CD4-positive, alpha-beta memory T cell (primary cell): ENCODE measurements at regions of chr15 and their contacts with region 1.

Region 1: DNA sequence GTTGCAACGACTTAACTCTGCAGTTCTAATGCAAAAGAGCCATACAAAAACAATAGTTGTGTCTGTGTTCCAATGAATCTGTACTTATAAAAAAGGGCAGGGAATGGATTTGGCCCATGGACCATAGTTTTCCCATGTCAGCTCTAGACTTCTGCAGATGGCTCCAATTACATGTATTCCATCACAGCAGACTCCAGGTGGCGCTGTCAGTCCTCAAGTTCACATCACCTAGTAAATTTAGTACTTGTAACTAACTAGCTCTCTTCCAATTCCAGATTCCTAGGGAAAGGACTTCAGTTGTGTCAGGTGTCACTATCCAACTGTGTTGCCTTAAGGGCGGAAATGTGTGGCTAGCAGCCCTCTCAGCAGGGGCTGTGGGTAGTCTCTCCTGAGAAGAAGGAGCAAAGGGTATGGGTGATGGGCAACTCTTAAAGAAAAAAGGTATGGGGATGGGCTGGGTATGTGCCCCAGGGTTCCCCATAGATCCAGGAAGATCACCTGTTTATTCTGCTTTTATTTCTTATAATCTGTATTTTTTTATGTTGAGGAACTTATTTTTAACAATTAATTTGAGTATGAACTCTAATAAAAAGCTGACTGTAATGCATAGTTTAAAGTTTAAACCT is 36.2 kb downstream of the BBS4 start:
- DNase-seq: peak; percentile 40 to 64 (median 60)
- H3K4me3 ChIP-seq: no peak overlapping the region
- H3K4me3 Mint-ChIP-seq: no peak overlapping the region
- H3K27ac ChIP-seq: no peak overlapping the region
- H3K27ac Mint-ChIP-seq: peak overlapping the region in 2 of 7 donors; percentile 27 to 29
- H3K4me1 ChIP-seq: no peaks in the 10 kb centered on the region
- H3K4me1 Mint-ChIP-seq: no peaks in the 10 kb centered on the region
- H3K27me3 ChIP-seq: no peaks in the 10 kb centered on the region
- H3K27me3 Mint-ChIP-seq: no peaks in the 10 kb centered on the region

Region 2: GRCh38 chr15:72732516-72732915 is 10.3 kb after region 1 on chr15:
- CTCF ChIA-PET with region 1: interaction called, 43 read pairs
- POLR2A ChIA-PET with region 1: no interaction called
- intact Hi-C with region 1: no loop called
- DNase-seq: no peak
- H3K4me3 ChIP-seq: no peak overlapping the region
- H3K4me3 Mint-ChIP-seq: no peak overlapping the region
- H3K27ac ChIP-seq: no peak overlapping the region
- H3K27ac Mint-ChIP-seq: peak overlapping the region in 3 of 7 donors; percentile 46 to 87 (median 54)
- H3K4me1 ChIP-seq: no peaks in the 10 kb centered on the region
- H3K4me1 Mint-ChIP-seq: peaks cover 8 to 12% (median 10%) of the 10 kb centered on the region in 4 donors
- H3K27me3 ChIP-seq: no peaks in the 10 kb centered on the region
- H3K27me3 Mint-ChIP-seq: no peaks in the 10 kb centered on the region

Region 3: GRCh38 chr15:72740219-72740618 is 18.0 kb after region 1 on chr15:
- CTCF ChIA-PET with region 1: interaction called, 43 read pairs
- POLR2A ChIA-PET with region 1: no interaction called
- intact Hi-C with region 1: no loop called
- DNase-seq: peak in 4 of 5 donors; percentile 9 to 46 (median 42)
- H3K4me3 ChIP-seq: peak overlapping the region in 1 of 2 donors; percentile 20
- H3K4me3 Mint-ChIP-seq: peak overlapping the region; percentile 32 to 83 (median 70)
- H3K27ac ChIP-seq: peak overlapping the region; percentile 39
- H3K27ac Mint-ChIP-seq: peak overlapping the region; percentile 41 to 89 (median 84)
- H3K4me1 ChIP-seq: peaks cover 29% of the 10 kb centered on the region
- H3K4me1 Mint-ChIP-seq: peaks cover 28 to 37% (median 32%) of the 10 kb centered on the region in 4 donors
- H3K27me3 ChIP-seq: no peaks in the 10 kb centered on the region
- H3K27me3 Mint-ChIP-seq: no peaks in the 10 kb centered on the region

Region 4: DNA sequence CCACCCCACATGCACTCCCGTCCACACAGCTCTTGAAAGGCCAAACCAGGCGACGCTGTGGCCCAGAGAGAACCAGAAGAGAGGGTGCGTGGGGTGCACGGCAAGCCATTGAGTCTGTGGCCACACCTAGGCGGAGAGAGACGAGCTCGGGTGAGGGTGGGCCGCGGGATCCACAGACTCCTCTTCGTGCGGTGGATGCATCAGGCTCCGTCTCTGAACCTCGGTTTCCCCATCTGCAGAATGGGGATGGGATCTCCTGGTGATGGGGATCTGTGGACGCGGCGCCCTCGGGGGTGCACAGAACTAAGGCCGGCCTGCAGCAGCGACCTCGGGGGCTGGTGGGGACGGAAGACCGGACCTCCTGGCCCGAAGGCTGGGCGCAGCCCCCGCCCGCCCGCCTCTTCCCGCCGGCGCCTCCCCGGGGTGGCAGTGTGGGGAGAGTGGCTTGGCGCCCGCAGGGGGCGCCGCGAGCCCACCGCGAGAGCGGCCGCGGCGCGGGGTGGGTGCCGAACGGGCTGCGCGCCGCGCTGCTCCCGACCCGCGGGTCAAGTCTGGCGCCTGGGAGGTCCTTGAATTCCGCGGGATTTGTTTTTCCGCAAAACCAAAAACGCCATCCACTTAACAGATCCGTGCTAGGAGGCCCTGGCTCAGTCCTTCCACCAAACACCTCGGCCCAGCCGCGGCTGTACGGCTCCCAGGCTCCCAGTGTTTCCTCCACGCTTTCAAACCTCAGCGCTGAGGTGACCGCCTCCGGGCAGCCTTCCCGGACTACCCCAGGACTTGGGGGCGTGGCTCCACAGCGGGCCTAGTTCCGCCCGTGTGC is 74.5 kb after region 1 on chr15:
- CTCF ChIA-PET with region 1: interaction called, 15 read pairs
- POLR2A ChIA-PET with region 1: no interaction called
- intact Hi-C with region 1: loop called (anchors 5 kb)
- DNase-seq: peak in 4 of 5 donors; percentile 28 to 47 (median 36)
- H3K4me3 ChIP-seq: peak overlapping the region in 1 of 2 donors; percentile 57
- H3K4me3 Mint-ChIP-seq: peak overlapping the region; percentile 84 to 91 (median 87)
- H3K27ac ChIP-seq: no peak overlapping the region
- H3K27ac Mint-ChIP-seq: peak overlapping the region in 6 of 7 donors; percentile 43 to 87 (median 82)
- H3K4me1 ChIP-seq: peaks cover 4% of the 10 kb centered on the region
- H3K4me1 Mint-ChIP-seq: peaks cover 5 to 20% (median 7%) of the 10 kb centered on the region in 4 donors
- H3K27me3 ChIP-seq: no peaks in the 10 kb centered on the region
- H3K27me3 Mint-ChIP-seq: peaks cover 10 to 11% of the 10 kb centered on the region in 2 donors

Region 5: DNA sequence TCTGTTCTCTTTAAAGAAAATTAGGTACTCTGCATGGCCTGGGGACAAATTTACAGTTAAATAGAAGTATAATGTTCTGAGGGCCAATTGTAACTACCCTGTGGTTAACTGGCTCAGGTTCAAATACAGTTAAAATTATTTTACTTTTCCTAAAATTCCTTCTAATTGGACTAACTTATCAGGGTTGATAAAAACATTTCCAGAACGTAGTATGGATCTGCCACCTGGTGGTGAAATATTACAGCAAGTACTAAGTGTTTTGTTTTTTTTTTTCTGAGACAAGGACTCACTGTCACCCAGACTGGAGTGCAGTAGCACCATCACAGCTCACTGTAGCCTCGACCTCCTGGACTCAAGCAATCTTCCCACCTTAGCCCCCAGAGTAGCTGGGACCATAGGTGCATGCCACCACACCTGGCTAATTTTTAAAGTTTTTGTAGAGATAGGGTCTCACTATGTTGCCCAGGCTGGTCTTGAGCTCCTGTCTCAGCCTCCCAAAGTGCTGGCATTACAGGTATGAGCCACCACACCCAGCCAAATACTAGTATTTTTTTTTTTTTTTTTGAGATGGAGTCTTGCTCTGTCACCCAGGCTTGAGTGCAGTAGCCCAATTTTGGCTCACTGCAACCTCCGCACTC is 359.3 kb after region 1 on chr15:
- CTCF ChIA-PET with region 1: interaction called, 47 read pairs
- POLR2A ChIA-PET with region 1: interaction called, 6 read pairs
- intact Hi-C with region 1: loop called (anchors 1 kb)
- DNase-seq: peak in 4 of 5 donors; percentile 40 to 51 (median 44)
- H3K4me3 ChIP-seq: no peak overlapping the region
- H3K4me3 Mint-ChIP-seq: no peak overlapping the region
- H3K27ac ChIP-seq: no peak overlapping the region
- H3K27ac Mint-ChIP-seq: no peak overlapping the region
- H3K4me1 ChIP-seq: no peaks in the 10 kb centered on the region
- H3K4me1 Mint-ChIP-seq: peaks cover 0 to 4% (median under 1%) of the 10 kb centered on the region in 4 donors
- H3K27me3 ChIP-seq: no peaks in the 10 kb centered on the region
- H3K27me3 Mint-ChIP-seq: no peaks in the 10 kb centered on the region

Region 6: GRCh38 chr15:73127301-73127936 is 405.2 kb after region 1 on chr15:
- CTCF ChIA-PET with region 1: no interaction called
- POLR2A ChIA-PET with region 1: no interaction called
- intact Hi-C with region 1: loop called (anchors 2 kb)
- DNase-seq: peak in 4 of 5 donors; percentile 8 to 36 (median 20)
- H3K4me3 ChIP-seq: no peak overlapping the region
- H3K4me3 Mint-ChIP-seq: no peak overlapping the region
- H3K27ac ChIP-seq: no peak overlapping the region
- H3K27ac Mint-ChIP-seq: peak overlapping the region in 1 of 7 donors; percentile 50
- H3K4me1 ChIP-seq: no peaks in the 10 kb centered on the region
- H3K4me1 Mint-ChIP-seq: peaks cover 0 to 2% (median under 1%) of the 10 kb centered on the region in 4 donors
- H3K27me3 ChIP-seq: no peaks in the 10 kb centered on the region
- H3K27me3 Mint-ChIP-seq: no peaks in the 10 kb centered on the region

Region 7: GRCh38 chr15:73273181-73274002 is 551.2 kb after region 1 on chr15:
- CTCF ChIA-PET with region 1: interaction called, 6 read pairs
- POLR2A ChIA-PET with region 1: no interaction called
- intact Hi-C with region 1: loop called (anchors 1 kb)
- DNase-seq: peak; percentile 37 to 50 (median 43)
- H3K4me3 ChIP-seq: no peak overlapping the region
- H3K4me3 Mint-ChIP-seq: peak overlapping the region in 4 of 8 donors; percentile 6 to 76 (median 32)
- H3K27ac ChIP-seq: no peak overlapping the region
- H3K27ac Mint-ChIP-seq: peak overlapping the region in 1 of 7 donors; percentile 67
- H3K4me1 ChIP-seq: no peaks in the 10 kb centered on the region
- H3K4me1 Mint-ChIP-seq: peaks cover 0 to 5% (median 3%) of the 10 kb centered on the region in 4 donors
- H3K27me3 ChIP-seq: no peaks in the 10 kb centered on the region
- H3K27me3 Mint-ChIP-seq: no peaks in the 10 kb centered on the region